SK-N-SH (cell line): ENCODE measurements at regions of chr20 and their contacts with region 1.

Region 1: DNA sequence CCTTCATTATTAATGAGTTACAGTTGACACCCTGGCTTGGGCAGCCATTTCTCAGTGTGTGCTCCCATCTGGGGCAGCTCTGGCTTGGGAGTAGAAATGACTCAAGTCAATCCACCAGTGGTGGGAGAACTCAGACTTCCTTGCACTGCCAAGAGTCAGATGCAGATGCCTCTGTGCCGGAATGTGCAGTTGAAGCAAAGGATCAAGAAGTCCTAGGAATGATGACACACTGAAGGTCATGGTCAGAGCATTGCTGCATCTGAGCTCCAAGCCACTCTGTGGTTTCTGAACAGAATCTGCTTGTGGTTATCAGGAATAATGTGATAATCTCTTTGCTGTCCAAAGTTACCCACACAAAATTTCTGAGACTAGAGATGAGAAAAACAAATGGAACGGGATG is 19.5 kb upstream of the PAX1 start:
- DNase-seq: no peak
- H3K4me3 ChIP-seq: no peak overlapping the region
- H3K27ac ChIP-seq: no peak overlapping the region
- H3K4me1 ChIP-seq: no peaks in the 10 kb centered on the region; a peak in 2 of 4 replicates
- H3K27me3 ChIP-seq: peaks cover 10% of the 10 kb centered on the region; the same call in 1 of the 2 replicates
- CTCF ChIP-seq: no peak
- EP300 ChIP-seq: no peak
- RAD21 ChIP-seq: no peak

Region 2: GRCh38 chr20:21702553-21703470 is 16.8 kb after region 1 on chr20:
- CTCF ChIA-PET with region 1: interaction called, 16 read pairs
- POLR2A ChIA-PET with region 1: no interaction called
- DNase-seq: peak; percentile 80
- H3K4me3 ChIP-seq: peak overlapping the region; percentile 21 to 54; a peak in 3 of 4 replicates
- H3K27ac ChIP-seq: no peak overlapping the region
- H3K4me1 ChIP-seq: no peaks in the 10 kb centered on the region; a peak in 1 of 4 replicates
- H3K27me3 ChIP-seq: peaks cover 78% of the 10 kb centered on the region
- CTCF ChIP-seq: peak; percentile 69
- EP300 ChIP-seq: no peak
- RAD21 ChIP-seq: peak; percentile 46

Region 3: DNA sequence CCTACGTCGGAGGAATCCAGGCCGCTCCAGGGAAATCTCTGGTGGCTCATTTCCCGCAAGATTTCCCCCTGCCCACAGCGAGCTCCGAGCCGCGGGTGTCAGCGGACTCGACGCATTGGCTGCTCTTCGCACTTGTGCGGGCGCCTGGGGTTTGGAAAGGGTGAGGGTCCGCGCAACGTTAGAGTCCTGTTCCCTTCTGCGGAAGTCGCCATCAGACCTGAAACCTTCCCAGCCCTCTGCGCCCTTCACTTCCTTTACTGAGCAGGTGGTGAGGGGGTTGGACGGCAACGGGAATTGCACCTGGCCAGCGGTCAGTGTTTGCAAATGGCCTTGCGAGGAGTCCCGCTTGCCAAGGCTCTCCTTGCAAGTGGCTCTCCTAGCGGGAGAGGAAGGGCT is 27.9 kb after region 1 on chr20:
- CTCF ChIA-PET with region 1: no interaction called
- POLR2A ChIA-PET with region 1: no interaction called
- DNase-seq: no peak
- H3K4me3 ChIP-seq: no peak overlapping the region
- H3K27ac ChIP-seq: no peak overlapping the region
- H3K4me1 ChIP-seq: no peaks in the 10 kb centered on the region
- H3K27me3 ChIP-seq: peaks cover 80% of the 10 kb centered on the region
- CTCF ChIP-seq: no peak
- EP300 ChIP-seq: no peak
- RAD21 ChIP-seq: no peak